BJ (cell line): ENCODE measurements at regions of chr2 and their contacts with region 1.

Region 1: GRCh38 chr2:96099861-96100798 is 16.2 kb downstream of the ADRA2B start:
- DNase-seq: no peak
- H3K4me3 ChIP-seq: no peak overlapping the region
- H3K27me3 ChIP-seq: no peaks in the 10 kb centered on the region
- CTCF ChIP-seq: no peak

Region 2: DNA sequence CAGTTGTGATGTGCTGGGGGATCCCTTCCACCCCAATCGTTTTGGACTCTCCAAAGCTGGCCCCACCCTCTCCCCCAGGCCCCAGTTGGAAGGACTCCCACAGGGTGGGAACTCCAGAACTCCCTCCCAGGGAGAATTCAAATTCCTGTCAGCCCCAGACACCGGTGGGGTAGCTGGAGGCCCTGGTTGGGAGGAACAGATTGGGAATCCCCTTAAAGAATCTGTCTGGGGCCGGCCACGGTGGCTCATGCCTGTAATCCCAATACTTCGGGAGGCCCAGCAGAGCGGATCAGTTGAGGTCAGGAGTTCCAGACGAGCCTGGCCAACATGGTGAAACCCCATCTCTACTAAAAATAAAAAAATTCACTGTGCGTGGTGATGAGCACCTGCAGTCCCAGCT is 264.0 kb before region 1 on chr2:
- CTCF ChIA-PET with region 1: no interaction called
- POLR2A ChIA-PET with region 1: no interaction called
- DNase-seq: no peak
- H3K4me3 ChIP-seq: no peak overlapping the region
- H3K27me3 ChIP-seq: no peaks in the 10 kb centered on the region
- CTCF ChIP-seq: no peak

Region 3: GRCh38 chr2:96072746-96073145 is 27.4 kb before region 1 on chr2:
- CTCF ChIA-PET with region 1: no interaction called
- POLR2A ChIA-PET with region 1: no interaction called
- DNase-seq: no peak
- H3K4me3 ChIP-seq: no peak overlapping the region
- H3K27me3 ChIP-seq: peaks cover 11% of the 10 kb centered on the region
- CTCF ChIP-seq: no peak

Region 4: GRCh38 chr2:96116879-96117697 is 17.0 kb after region 1 on chr2:
- CTCF ChIA-PET with region 1: interaction called, 25 read pairs
- POLR2A ChIA-PET with region 1: no interaction called
- DNase-seq: no peak
- H3K4me3 ChIP-seq: peak overlapping the region; percentile 20
- H3K27me3 ChIP-seq: peaks cover 45% of the 10 kb centered on the region
- CTCF ChIP-seq: peak; percentile 50

Region 5: GRCh38 chr2:96129528-96130120 is 29.5 kb after region 1 on chr2:
- CTCF ChIA-PET with region 1: no interaction called
- POLR2A ChIA-PET with region 1: no interaction called
- DNase-seq: no peak
- H3K4me3 ChIP-seq: no peak overlapping the region
- H3K27me3 ChIP-seq: peaks cover 3% of the 10 kb centered on the region
- CTCF ChIP-seq: no peak